ENCODE measurements at regions of chr2 and their contacts with region 1.

Region 1: GRCh38 chr2:121689356-121689755 is 40.1 kb upstream of the CLASP1 start:
- DNase-seq: no peak
- ATAC-seq: peak; percentile 80
- H3K4me3 ChIP-seq: no peak overlapping the region
- H3K27ac ChIP-seq: no peak overlapping the region
- H3K4me1 ChIP-seq: peaks cover 2 to 3% of the 10 kb centered on the region in 2 experiments; a peak in 2 of 4 replicates
- H3K27me3 ChIP-seq: no peaks in the 10 kb centered on the region
- CTCF ChIP-seq: peak; percentile 34 to 45 (median 37); a peak in 5 of 6 replicates
- POLR2A ChIP-seq: no peak
- RAD21 ChIP-seq: peak; percentile 44

Region 2: GRCh38 chr2:121479882-121480522 is 209.4 kb before region 1 on chr2:
- CTCF ChIA-PET with region 1: no interaction called
- POLR2A ChIA-PET with region 1: no interaction called
- RAD21 ChIA-PET with region 1: no interaction called
- intact Hi-C with region 1: no loop called
- DNase-seq: no peak
- ATAC-seq: peak; percentile 74
- H3K4me3 ChIP-seq: no peak overlapping the region
- H3K27ac ChIP-seq: no peak overlapping the region
- H3K4me1 ChIP-seq: peaks cover 4% of the 10 kb centered on the region in 2 experiments; a peak in 3 of 4 replicates
- H3K27me3 ChIP-seq: no peaks in the 10 kb centered on the region
- CTCF ChIP-seq: peak in 2 of 3 experiments; percentile 39 to 45; a peak in 4 of 6 replicates
- POLR2A ChIP-seq: no peak
- RAD21 ChIP-seq: no peak

Region 3: GRCh38 chr2:121583555-121583954 is 105.8 kb before region 1 on chr2:
- CTCF ChIA-PET with region 1: no interaction called
- POLR2A ChIA-PET with region 1: no interaction called
- RAD21 ChIA-PET with region 1: no interaction called
- intact Hi-C with region 1: no loop called
- DNase-seq: no peak
- ATAC-seq: no peak
- H3K4me3 ChIP-seq: no peak overlapping the region
- H3K27ac ChIP-seq: no peak overlapping the region
- H3K4me1 ChIP-seq: no peaks in the 10 kb centered on the region; a peak in 1 of 4 replicates
- H3K27me3 ChIP-seq: no peaks in the 10 kb centered on the region
- CTCF ChIP-seq: no peak
- POLR2A ChIP-seq: no peak
- RAD21 ChIP-seq: no peak

Region 4: GRCh38 chr2:121649596-121650314 is 39.6 kb before region 1 on chr2:
- CTCF ChIA-PET with region 1: no interaction called
- POLR2A ChIA-PET with region 1: no interaction called
- RAD21 ChIA-PET with region 1: no interaction called
- intact Hi-C with region 1: loop called (anchors 5 kb)
- DNase-seq: peak; percentile 93
- ATAC-seq: peak; percentile 96
- H3K4me3 ChIP-seq: peak overlapping the region; percentile 78 to 86
- H3K27ac ChIP-seq: peak overlapping the region; percentile 87
- H3K4me1 ChIP-seq: peaks cover 6 to 19% of the 10 kb centered on the region in 2 experiments; a peak in 3 of 4 replicates
- H3K27me3 ChIP-seq: no peaks in the 10 kb centered on the region
- CTCF ChIP-seq: no peak
- POLR2A ChIP-seq: peak; percentile 90
- RAD21 ChIP-seq: no peak; the same call in 1 of the 2 replicates

Region 5: GRCh38 chr2:121699421-121700333 is 10.3 kb after region 1 on chr2:
- CTCF ChIA-PET with region 1: interaction called, 11 read pairs
- POLR2A ChIA-PET with region 1: interaction called, 6 read pairs
- RAD21 ChIA-PET with region 1: no interaction called
- intact Hi-C with region 1: no loop called
- DNase-seq: peak; percentile 71
- ATAC-seq: peak; percentile 85
- H3K4me3 ChIP-seq: peak overlapping the region; percentile 9 to 51; a peak in 3 of 4 replicates
- H3K27ac ChIP-seq: peak overlapping the region; percentile 7; the same call in 1 of the 2 replicates
- H3K4me1 ChIP-seq: peaks cover 29 to 40% of the 10 kb centered on the region in 2 experiments
- H3K27me3 ChIP-seq: no peaks in the 10 kb centered on the region
- CTCF ChIP-seq: no peak
- POLR2A ChIP-seq: no peak
- RAD21 ChIP-seq: no peak

Region 6: DNA sequence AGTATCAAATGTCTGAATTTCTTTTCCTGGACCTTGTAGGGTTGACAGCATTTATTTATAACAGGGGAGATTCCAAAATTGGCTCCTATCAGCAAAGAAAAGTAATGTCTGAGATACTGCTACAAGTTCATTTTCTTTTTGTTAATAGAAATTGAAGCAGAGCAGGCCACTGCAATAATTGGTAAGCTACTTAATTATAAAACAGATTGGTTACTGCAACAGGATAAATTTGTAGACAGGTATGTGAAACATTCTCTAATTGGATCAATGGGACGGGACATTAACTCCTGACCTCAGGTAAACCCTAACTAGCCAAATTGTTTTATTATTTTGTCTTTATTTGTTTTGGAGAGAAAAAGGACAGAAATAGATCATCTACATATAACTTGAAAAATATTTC is 26.8 kb after region 1 on chr2:
- CTCF ChIA-PET with region 1: no interaction called
- POLR2A ChIA-PET with region 1: no interaction called
- RAD21 ChIA-PET with region 1: no interaction called
- intact Hi-C with region 1: no loop called
- DNase-seq: no peak
- ATAC-seq: no peak
- H3K4me3 ChIP-seq: no peak overlapping the region
- H3K27ac ChIP-seq: no peak overlapping the region
- H3K4me1 ChIP-seq: no peaks in the 10 kb centered on the region
- H3K27me3 ChIP-seq: no peaks in the 10 kb centered on the region
- CTCF ChIP-seq: no peak
- POLR2A ChIP-seq: no peak
- RAD21 ChIP-seq: no peak

Measured in HCT116 (cell line).